Esophagus squamous epithelium (tissue), 5 donors: ENCODE measurements at regions of chr6 and their contacts with region 1.

Region 1: DNA sequence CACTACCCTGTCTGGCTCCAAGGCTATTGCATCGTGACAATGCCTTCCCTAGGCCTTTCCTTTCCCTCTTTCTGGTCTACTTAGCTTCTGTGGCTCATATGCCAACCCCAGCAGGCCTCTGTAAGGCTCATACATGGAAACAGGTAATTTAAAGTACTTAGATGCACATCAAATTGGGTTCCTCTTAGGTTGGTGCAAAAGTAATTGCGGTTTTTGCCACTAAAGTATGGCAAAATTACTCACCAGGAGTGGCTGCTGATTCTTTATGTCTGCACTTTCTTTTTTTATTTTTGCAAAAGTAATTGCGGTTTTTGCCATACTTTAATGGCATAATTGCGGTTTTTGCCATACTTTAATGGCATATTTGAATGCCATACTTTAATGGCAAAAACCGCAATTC is 538.6 kb downstream of the PKHD1 start:
- DNase-seq: no peak
- H3K4me3 ChIP-seq: no peak overlapping the region
- H3K27ac ChIP-seq: no peak overlapping the region
- H3K4me1 ChIP-seq: no peaks in the 10 kb centered on the region
- H3K27me3 ChIP-seq: no peaks in the 10 kb centered on the region
- CTCF ChIP-seq: no peak
- POLR2A ChIP-seq: no peak

Region 2: DNA sequence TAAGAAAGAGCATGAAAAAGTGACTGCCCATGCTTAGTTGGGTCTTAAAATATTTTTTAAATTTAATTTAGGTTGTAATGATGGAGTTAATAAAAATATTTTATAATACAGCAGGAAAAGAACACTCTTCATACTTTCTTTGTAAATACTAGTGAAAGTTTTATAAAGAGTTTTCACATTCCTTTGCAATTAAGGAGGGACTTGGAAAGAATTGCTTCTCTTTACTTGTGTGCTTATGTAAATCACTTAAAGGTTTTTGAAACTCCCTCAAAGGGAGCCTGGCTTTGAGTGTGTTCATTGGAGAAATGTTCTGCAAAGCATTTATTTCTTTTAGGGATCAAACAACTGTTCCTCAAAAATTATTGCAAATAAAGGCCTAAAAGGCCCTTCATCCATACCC is 741.8 kb before region 1 on chr6:
- intact Hi-C with region 1: loop called (anchors 5 kb)
- DNase-seq: no peak
- H3K4me3 ChIP-seq: no peak overlapping the region
- H3K27ac ChIP-seq: no peak overlapping the region
- H3K4me1 ChIP-seq: no peaks in the 10 kb centered on the region
- H3K27me3 ChIP-seq: peaks cover 0 to 5% (median 0%) of the 10 kb centered on the region in 4 donors
- CTCF ChIP-seq: no peak
- POLR2A ChIP-seq: no peak